GM13976 (cell line): ENCODE measurements at regions of chr15 and their contacts with region 1.

Region 1: GRCh38 chr15:85178308-85178707 is 196.7 kb downstream of the PDE8A start:
- DNase-seq: no peak
- CTCF ChIP-seq: no peak

Region 2: GRCh38 chr15:84600851-84601838 is 577.2 kb before region 1 on chr15 and contains the start of gene ZSCAN2:
- in situ Hi-C with region 1: loop called (anchors 25 kb)
- DNase-seq: peak; percentile 95
- CTCF ChIP-seq: no peak

Region 3: DNA sequence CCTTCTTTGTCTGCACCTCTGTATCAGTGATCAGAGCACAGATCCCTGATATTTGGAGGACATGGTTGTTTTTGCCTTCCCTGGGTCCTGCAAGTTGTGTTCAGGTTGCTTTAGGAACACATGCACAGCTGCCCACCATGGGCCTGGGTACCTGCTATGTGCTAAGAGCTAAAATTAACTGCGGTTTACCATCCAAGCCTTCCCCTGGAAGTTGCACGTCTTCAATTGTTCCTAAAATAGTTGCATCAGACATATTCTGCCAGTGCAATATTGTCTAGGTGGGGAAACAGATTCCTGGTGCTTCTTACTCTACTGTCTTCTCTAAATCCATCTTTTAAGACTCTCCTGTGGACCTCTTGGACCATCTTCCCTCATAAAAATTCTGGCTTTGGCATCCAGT is 115.7 kb before region 1 on chr15:
- in situ Hi-C with region 1: no loop called
- DNase-seq: no peak
- CTCF ChIP-seq: no peak